Calu3 (cell line): ENCODE measurements at regions of chr3 and their contacts with region 1.

Region 1: GRCh38 chr3:111249421-111249820 is 177.8 kb downstream of the NECTIN3 start:
- DNase-seq: no peak
- H3K4me3 Mint-ChIP-seq: no peak overlapping the region
- H3K27ac Mint-ChIP-seq: no peak overlapping the region
- H3K4me1 Mint-ChIP-seq: no peaks in the 10 kb centered on the region
- H3K27me3 Mint-ChIP-seq: no peaks in the 10 kb centered on the region
- CTCF ChIP-seq: no peak

Region 2: GRCh38 chr3:111210003-111210711 is 39.3 kb before region 1 on chr3:
- CTCF ChIA-PET with region 1: no interaction called
- intact Hi-C with region 1: loop called (anchors 1 kb)
- DNase-seq: no peak
- H3K4me3 Mint-ChIP-seq: no peak overlapping the region
- H3K27ac Mint-ChIP-seq: no peak overlapping the region
- H3K4me1 Mint-ChIP-seq: no peaks in the 10 kb centered on the region
- H3K27me3 Mint-ChIP-seq: no peaks in the 10 kb centered on the region
- CTCF ChIP-seq: no peak